WTC11 (cell line): ENCODE measurements at regions of chr4 and their contacts with region 1.

Region 1: DNA sequence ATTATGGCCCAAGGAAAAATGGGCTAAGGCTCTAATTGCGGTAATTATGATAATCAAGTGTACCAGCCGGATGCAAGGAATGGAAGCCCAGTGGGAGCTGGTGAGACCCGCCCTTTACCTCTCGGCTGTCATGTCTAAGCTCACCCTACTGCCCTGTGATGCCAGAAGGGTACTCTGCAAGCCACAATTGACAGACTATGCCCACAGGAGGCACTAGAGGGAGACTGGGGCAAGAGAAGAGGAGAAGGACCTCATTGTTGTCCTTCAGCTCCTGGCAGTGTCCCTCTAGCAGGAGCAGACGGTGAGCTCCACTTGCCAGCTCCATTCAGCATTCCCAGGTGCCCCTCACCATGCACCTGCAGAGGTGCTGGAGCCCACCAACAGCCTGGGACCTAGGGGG is 141.8 kb downstream of the SMIM20 start:
- DNase-seq: no peak
- ATAC-seq: peak; percentile 65
- H3K4me3 Mint-ChIP-seq: no peak overlapping the region
- H3K27ac Mint-ChIP-seq: no peak overlapping the region
- H3K4me1 Mint-ChIP-seq: no peaks in the 10 kb centered on the region
- H3K27me3 Mint-ChIP-seq: no peaks in the 10 kb centered on the region; the same call in 1 of the 2 replicates
- CTCF ChIP-seq: no peak

Region 2: GRCh38 chr4:26069218-26069617 is 13.4 kb after region 1 on chr4:
- CTCF ChIA-PET with region 1: interaction called, 11 read pairs
- POLR2A ChIA-PET with region 1: no interaction called
- DNase-seq: no peak
- ATAC-seq: peak; percentile 97
- H3K4me3 Mint-ChIP-seq: no peak overlapping the region
- H3K27ac Mint-ChIP-seq: no peak overlapping the region
- H3K4me1 Mint-ChIP-seq: peaks cover 11% of the 10 kb centered on the region
- H3K27me3 Mint-ChIP-seq: no peaks in the 10 kb centered on the region
- CTCF ChIP-seq: peak; percentile 58

Region 3: DNA sequence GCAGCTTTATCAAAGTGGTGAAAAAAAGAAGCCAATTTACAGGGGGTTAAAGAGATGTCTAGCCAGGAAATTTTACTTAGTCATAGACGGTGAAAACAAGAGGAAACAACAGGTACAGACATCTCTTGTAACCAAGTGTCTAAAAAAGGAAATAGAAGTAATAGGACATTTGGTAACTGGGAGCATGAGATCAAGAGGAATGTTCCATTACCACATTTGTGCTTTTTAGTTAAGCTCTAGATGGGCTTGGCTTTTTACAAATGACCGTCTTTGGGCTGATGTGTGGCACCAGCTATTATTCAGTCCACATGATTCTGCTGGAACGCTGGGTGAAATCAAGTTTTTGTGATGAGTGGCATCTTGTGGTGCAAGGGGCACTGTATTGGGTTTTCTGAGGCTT is 37.7 kb after region 1 on chr4:
- CTCF ChIA-PET with region 1: no interaction called
- POLR2A ChIA-PET with region 1: no interaction called
- DNase-seq: no peak
- ATAC-seq: no peak
- H3K4me3 Mint-ChIP-seq: no peak overlapping the region
- H3K27ac Mint-ChIP-seq: no peak overlapping the region
- H3K4me1 Mint-ChIP-seq: no peaks in the 10 kb centered on the region
- H3K27me3 Mint-ChIP-seq: peaks cover 2% of the 10 kb centered on the region; the same call in 1 of the 2 replicates
- CTCF ChIP-seq: no peak

Region 4: GRCh38 chr4:26687728-26688127 is 631.9 kb after region 1 on chr4:
- CTCF ChIA-PET with region 1: no interaction called
- POLR2A ChIA-PET with region 1: no interaction called
- DNase-seq: no peak
- ATAC-seq: no peak
- H3K4me3 Mint-ChIP-seq: no peak overlapping the region
- H3K27ac Mint-ChIP-seq: no peak overlapping the region
- H3K4me1 Mint-ChIP-seq: peaks cover 26% of the 10 kb centered on the region
- H3K27me3 Mint-ChIP-seq: no peaks in the 10 kb centered on the region
- CTCF ChIP-seq: no peak